ENCODE measurements at regions of chr3 and their contacts with region 1.

Region 1: GRCh38 chr3:191300422-191300821 is 28.8 kb upstream of the CCDC50 start:
- DNase-seq: no peak
- H3K4me3 ChIP-seq: no peak overlapping the region
- H3K27ac ChIP-seq: no peak overlapping the region
- H3K4me1 ChIP-seq: no peaks in the 10 kb centered on the region
- H3K27me3 ChIP-seq: no peaks in the 10 kb centered on the region
- CTCF ChIP-seq: no peak
- POLR2A ChIP-seq: no peak

Region 2: DNA sequence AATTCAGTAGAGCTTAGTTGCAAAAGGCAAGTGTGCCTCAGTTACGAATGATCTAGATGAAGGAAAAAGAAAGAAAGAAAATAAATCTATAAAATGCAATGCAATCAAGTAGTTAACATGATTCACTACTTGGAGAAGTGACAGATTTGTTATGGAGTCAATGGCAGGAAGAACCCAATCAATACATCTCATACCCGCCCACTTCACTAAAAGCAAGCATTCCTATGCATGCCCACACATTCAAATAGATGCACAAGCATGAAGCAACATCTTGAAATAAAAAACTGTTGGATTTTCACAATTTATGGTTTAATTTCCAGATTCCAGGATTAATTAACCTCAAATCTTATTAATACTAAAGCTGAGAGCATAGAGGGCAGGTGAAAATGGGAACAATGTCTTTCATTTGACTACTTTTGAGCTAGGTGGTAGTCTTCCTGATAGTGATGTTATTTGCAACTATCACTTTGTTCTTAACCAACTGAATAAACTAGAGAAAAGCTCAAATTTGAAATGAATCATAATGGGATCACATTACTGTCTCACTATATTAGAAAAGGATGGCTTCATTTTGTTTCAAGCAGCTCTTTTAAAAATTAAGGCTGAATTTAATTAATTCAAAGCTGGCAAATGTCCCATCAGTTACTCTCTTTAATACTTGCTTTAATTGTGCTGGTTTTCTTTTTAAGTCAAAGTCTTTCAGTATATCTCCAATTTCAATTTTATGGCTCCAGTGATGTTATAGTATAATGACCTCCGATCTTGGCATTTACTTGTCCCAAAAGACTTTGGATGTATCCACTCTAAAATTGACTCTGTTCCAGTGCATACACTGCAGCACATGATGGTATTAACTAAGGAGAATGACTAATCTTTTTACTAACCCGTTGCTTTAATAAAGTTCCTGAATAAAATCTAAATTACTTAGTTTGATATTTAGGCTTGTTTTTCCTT is 17.9 kb before region 1 on chr3:
- intact Hi-C with region 1: loop called (anchors 1 kb)
- DNase-seq: no peak
- H3K4me3 ChIP-seq: no peak overlapping the region
- H3K27ac ChIP-seq: no peak overlapping the region
- H3K4me1 ChIP-seq: peaks cover 13% of the 10 kb centered on the region
- H3K27me3 ChIP-seq: no peaks in the 10 kb centered on the region
- CTCF ChIP-seq: no peak
- POLR2A ChIP-seq: no peak

Region 3: GRCh38 chr3:191543897-191544296 is 243.5 kb after region 1 on chr3:
- intact Hi-C with region 1: no loop called
- DNase-seq: no peak
- H3K4me3 ChIP-seq: no peak overlapping the region
- H3K27ac ChIP-seq: no peak overlapping the region
- H3K4me1 ChIP-seq: no peaks in the 10 kb centered on the region
- H3K27me3 ChIP-seq: no peaks in the 10 kb centered on the region
- CTCF ChIP-seq: no peak
- POLR2A ChIP-seq: no peak